ENCODE measurements at regions of chr9 and their contacts with region 1.

Region 1: GRCh38 chr9:83649080-83649479 is 26.1 kb downstream of the IDNK start:
- DNase-seq: peak; percentile 77
- H3K4me3 ChIP-seq: no peak overlapping the region; a peak in 1 of 4 replicates
- H3K27ac ChIP-seq: peak overlapping the region in 1 of 2 experiments; percentile 85; a peak in 2 of 4 replicates
- H3K4me1 ChIP-seq: peaks cover 0 to 13% of the 10 kb centered on the region in 2 experiments; a peak in 3 of 4 replicates
- H3K27me3 ChIP-seq: no peaks in the 10 kb centered on the region
- CTCF ChIP-seq: peak; percentile 73
- EP300 ChIP-seq: no peak
- RAD21 ChIP-seq: peak; percentile 80

Region 2: DNA sequence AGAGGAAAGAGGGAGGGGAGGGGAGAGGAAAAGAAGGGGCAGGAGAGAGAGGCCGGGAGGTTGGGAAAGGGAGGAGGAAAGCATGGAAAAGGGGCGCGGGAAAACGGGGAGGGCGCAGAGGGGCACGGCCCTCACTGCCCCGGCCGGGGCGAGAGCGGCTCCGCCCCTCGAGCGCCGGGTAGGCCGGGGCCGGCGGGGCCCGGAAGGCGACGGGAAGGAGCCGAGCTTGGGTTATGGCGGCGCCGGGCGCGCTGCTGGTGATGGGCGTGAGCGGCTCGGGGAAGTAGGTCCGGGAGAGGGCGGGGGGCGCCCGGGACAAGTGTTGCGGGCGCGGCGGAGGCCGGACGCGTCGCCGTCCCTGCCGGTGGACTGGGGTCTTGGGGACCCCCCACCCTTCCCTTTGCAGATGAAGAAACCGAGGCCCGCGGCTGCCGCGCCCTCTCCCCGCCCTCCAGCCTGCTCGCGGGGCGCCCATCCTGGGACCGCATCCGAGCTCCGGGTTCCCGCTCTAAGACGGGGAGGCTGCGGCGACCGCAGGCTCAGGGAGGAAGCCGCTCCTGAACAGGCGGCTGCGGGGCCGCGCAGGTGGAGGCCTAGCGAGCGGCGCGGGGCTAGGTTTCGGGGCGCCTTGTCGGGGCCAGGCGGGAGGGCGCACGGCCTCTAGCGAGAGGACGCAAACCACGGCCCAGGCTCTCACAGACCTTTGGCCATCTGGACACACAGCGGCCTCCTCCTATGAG is 26.0 kb before region 1 on chr9 and contains the start of gene IDNK:
- CTCF ChIA-PET with region 1: interaction called, 16 read pairs
- POLR2A ChIA-PET with region 1: interaction called, 11 read pairs
- DNase-seq: peak; percentile 89
- H3K4me3 ChIP-seq: peak within 1 kb of the TSS; percentile 69 to 80
- H3K27ac ChIP-seq: peak within 1 kb of the TSS; percentile 55 to 93
- H3K4me1 ChIP-seq: peaks cover 0 to 16% of the 10 kb centered on the region in 2 experiments; a peak in 2 of 4 replicates
- H3K27me3 ChIP-seq: no peaks in the 10 kb centered on the region
- CTCF ChIP-seq: no peak
- EP300 ChIP-seq: no peak
- RAD21 ChIP-seq: 0 out of 2 replicates have a peak, but pooled peaks have one; percentile 3
- polyA plus RNA-seq, gene IDNK: 4.2 and 4.9 TPM in 2 replicates

Region 3: DNA sequence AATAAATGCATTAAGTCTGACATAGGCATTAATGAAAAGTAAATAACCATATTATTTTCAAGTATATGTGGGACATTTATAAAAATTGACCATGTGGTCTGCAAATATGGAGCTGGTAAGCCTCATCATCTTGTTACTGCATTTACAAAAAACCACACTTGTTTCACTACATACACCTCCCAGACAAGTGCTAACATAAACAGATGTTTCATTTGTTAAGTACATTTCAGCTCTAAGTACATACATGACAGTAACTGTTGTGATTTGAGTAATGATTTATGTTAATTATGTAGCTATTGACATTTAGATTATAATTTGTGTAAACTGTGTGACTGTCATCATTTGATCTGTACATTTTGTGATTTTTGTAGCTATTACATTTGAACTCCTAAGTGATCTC is 12.3 kb before region 1 on chr9:
- CTCF ChIA-PET with region 1: interaction called, 17 read pairs
- POLR2A ChIA-PET with region 1: interaction called, 3 read pairs
- DNase-seq: no peak
- H3K4me3 ChIP-seq: no peak overlapping the region
- H3K27ac ChIP-seq: no peak overlapping the region
- H3K4me1 ChIP-seq: no peaks in the 10 kb centered on the region
- H3K27me3 ChIP-seq: no peaks in the 10 kb centered on the region
- CTCF ChIP-seq: no peak
- EP300 ChIP-seq: no peak
- RAD21 ChIP-seq: no peak

Region 4: GRCh38 chr9:83665580-83666200 is 16.6 kb after region 1 on chr9:
- CTCF ChIA-PET with region 1: interaction called, 12 read pairs
- POLR2A ChIA-PET with region 1: no interaction called
- DNase-seq: no peak
- H3K4me3 ChIP-seq: no peak overlapping the region
- H3K27ac ChIP-seq: no peak overlapping the region
- H3K4me1 ChIP-seq: peaks cover 0 to 5% of the 10 kb centered on the region in 2 experiments; a peak in 1 of 4 replicates
- H3K27me3 ChIP-seq: no peaks in the 10 kb centered on the region
- CTCF ChIP-seq: no peak
- EP300 ChIP-seq: no peak
- RAD21 ChIP-seq: no peak